ENCODE measurements at regions of chr6 and their contacts with region 1.

Region 1: DNA sequence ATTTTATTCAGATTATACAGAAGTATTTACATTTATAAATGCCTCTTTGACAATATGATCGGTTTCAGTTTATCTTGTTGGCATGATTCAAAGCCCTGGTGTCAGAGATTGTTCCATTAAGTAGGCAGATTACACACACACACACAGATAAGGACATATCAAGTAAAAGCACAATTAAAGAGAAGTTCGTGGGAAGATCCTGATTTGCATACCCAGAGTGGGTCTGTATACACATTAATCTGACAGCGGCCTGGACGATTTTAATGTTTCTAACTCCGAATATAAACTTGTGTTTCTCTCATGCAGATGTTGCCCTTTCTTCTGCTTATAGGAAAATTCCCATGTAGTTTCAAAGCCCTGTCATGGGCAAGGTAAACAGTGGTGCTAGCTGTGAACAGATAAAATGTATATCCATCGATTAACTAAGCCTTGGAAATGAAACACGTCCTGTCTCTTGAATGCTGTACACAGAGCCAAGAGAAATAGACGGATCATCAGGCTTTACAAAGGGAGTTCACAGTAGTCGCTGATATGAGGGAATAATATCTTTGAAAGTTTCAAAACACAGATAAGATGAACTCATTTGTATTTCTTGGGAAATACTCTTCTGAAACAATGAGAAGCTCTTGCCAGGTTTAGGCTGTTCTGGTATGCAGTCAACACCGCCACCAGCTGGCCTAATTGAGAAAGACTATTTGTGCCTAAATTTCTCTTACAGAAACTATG is 108.2 kb upstream of the GMDS start:
- DNase-seq: peak; percentile 56 to 73 (median 59)
- ATAC-seq: peak; percentile 90
- H3K4me3 ChIP-seq: no peak overlapping the region
- H3K27ac ChIP-seq: no peak overlapping the region
- H3K4me1 ChIP-seq: no peaks in the 10 kb centered on the region
- H3K27me3 ChIP-seq: no peaks in the 10 kb centered on the region; a peak in 2 of 5 replicates
- CTCF ChIP-seq: peak; percentile 72 to 96 (median 80)
- EP300 ChIP-seq: no peak
- POLR2A ChIP-seq: no peak
- RAD21 ChIP-seq: peak; percentile 90 to 93

Region 2: GRCh38 chr6:1047981-1048541 is 1305.5 kb before region 1 on chr6:
- CTCF ChIA-PET with region 1: no interaction called
- POLR2A ChIA-PET with region 1: no interaction called
- in situ Hi-C with region 1: no loop called
- intact Hi-C with region 1: no loop called
- DNase-seq: no peak
- ATAC-seq: no peak
- H3K4me3 ChIP-seq: no peak overlapping the region
- H3K27ac ChIP-seq: no peak overlapping the region
- H3K4me1 ChIP-seq: no peaks in the 10 kb centered on the region
- H3K27me3 ChIP-seq: peaks cover 18 to 21% of the 10 kb centered on the region in 2 experiments; a peak in 4 of 5 replicates
- CTCF ChIP-seq: no peak
- EP300 ChIP-seq: no peak
- POLR2A ChIP-seq: no peak
- RAD21 ChIP-seq: no peak

Region 3: DNA sequence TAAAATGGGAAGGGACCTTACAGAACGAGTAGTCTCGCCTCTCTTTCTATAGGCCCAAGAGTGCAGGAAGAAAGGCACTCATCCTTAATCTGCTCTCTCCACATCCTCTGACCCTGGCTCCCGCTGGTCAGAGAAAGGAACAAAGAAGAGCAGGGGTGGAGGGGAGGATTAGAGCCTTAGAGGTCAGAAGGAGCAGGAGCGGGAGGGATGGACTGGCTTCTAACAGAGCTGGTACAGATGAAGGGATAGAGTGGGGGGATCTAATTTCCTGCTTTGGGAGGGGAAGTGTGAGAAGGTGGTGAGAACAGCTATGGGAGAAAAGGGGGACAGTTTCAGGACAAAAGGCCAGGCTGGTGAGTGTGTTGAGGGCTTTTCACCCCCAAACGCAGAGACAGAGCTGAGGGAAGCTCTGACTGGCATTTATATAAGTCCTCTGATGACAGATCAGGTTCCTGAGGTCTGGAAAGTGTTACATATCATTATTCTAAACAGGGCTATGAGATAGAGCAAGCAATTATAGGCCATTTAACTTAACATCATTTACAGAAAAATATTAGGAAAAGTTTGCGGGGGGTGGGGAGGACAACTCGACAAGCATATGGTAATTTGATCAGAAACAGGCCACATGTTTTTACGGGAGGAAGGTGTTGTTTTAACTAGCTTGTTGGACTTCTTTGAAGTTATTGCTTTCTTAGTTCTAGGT is 632.8 kb before region 1 on chr6:
- CTCF ChIA-PET with region 1: no interaction called
- POLR2A ChIA-PET with region 1: no interaction called
- in situ Hi-C with region 1: no loop called
- intact Hi-C with region 1: no loop called
- DNase-seq: no peak
- ATAC-seq: no peak
- H3K4me3 ChIP-seq: no peak overlapping the region
- H3K27ac ChIP-seq: no peak overlapping the region
- H3K4me1 ChIP-seq: no peaks in the 10 kb centered on the region; a peak in 1 of 5 replicates
- H3K27me3 ChIP-seq: peaks cover 0 to 9% of the 10 kb centered on the region in 2 experiments; a peak in 3 of 5 replicates
- CTCF ChIP-seq: no peak
- EP300 ChIP-seq: no peak
- POLR2A ChIP-seq: no peak
- RAD21 ChIP-seq: no peak

Region 4: GRCh38 chr6:1893470-1894130 is 460.0 kb before region 1 on chr6:
- CTCF ChIA-PET with region 1: no interaction called
- POLR2A ChIA-PET with region 1: no interaction called
- in situ Hi-C with region 1: loop called (anchors 10 kb)
- intact Hi-C with region 1: no loop called
- DNase-seq: peak in 2 of 4 experiments; percentile 18 to 20
- ATAC-seq: 0 out of 3 replicates have a peak, but pooled peaks have one; percentile 42
- H3K4me3 ChIP-seq: no peak overlapping the region
- H3K27ac ChIP-seq: no peak overlapping the region
- H3K4me1 ChIP-seq: no peaks in the 10 kb centered on the region
- H3K27me3 ChIP-seq: peaks cover 3 to 11% of the 10 kb centered on the region in 2 experiments; a peak in 4 of 5 replicates
- CTCF ChIP-seq: peak; percentile 32 to 52 (median 43); a peak in 2 of 6 replicates
- EP300 ChIP-seq: no peak
- POLR2A ChIP-seq: no peak
- RAD21 ChIP-seq: peak; percentile 61 to 65

Region 5: DNA sequence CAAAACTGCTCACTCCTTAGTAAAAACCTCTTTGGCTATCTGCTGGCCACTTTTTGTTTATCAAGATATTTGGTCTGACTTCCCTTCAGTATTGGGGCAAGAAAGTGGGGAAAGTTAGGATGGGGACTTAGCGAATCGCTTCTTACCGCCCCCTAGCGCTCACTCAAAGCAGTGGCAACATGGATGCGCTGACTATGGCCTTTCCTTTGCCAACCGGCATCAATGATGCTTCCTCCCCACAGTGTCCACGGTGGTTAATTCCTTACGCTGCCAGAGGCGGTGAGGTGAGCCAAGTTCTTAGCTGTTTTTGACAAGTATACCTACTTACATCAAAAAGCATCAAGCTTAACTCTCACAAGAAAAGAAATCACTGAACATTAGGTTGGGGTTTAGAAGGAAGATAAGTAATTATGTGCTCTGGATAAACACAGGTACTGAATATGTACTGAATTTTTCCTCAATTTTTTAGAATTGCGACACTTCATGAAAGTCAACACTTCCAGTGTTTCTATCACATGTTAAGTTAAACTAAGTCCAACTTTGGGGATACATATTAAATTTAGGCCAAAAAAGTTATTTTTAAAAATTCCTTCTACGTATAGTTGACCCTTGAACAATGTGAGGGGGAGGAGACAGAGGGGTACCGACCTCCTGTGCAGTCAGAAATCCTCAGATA is 194.8 kb before region 1 on chr6:
- CTCF ChIA-PET with region 1: no interaction called
- POLR2A ChIA-PET with region 1: no interaction called
- in situ Hi-C with region 1: no loop called
- intact Hi-C with region 1: loop called (anchors 1 kb)
- DNase-seq: peak; percentile 75 to 79 (median 76)
- ATAC-seq: peak; percentile 100
- H3K4me3 ChIP-seq: no peak overlapping the region
- H3K27ac ChIP-seq: no peak overlapping the region
- H3K4me1 ChIP-seq: no peaks in the 10 kb centered on the region
- H3K27me3 ChIP-seq: peaks cover 0 to 3% of the 10 kb centered on the region in 2 experiments; a peak in 2 of 5 replicates
- CTCF ChIP-seq: peak; percentile 86 to 96 (median 89)
- EP300 ChIP-seq: no peak
- POLR2A ChIP-seq: no peak
- RAD21 ChIP-seq: peak; percentile 41 to 68

Region 6: GRCh38 chr6:2209226-2209809 is 144.3 kb before region 1 on chr6:
- CTCF ChIA-PET with region 1: interaction called, 17 read pairs
- POLR2A ChIA-PET with region 1: no interaction called
- in situ Hi-C with region 1: no loop called
- intact Hi-C with region 1: loop called (anchors 1 kb)
- DNase-seq: peak in 3 of 4 experiments; percentile 39 to 62 (median 49)
- ATAC-seq: peak; percentile 96
- H3K4me3 ChIP-seq: no peak overlapping the region
- H3K27ac ChIP-seq: no peak overlapping the region
- H3K4me1 ChIP-seq: no peaks in the 10 kb centered on the region
- H3K27me3 ChIP-seq: no peaks in the 10 kb centered on the region; a peak in 2 of 5 replicates
- CTCF ChIP-seq: peak; percentile 69 to 75 (median 75)
- EP300 ChIP-seq: no peak
- POLR2A ChIP-seq: no peak
- RAD21 ChIP-seq: peak; percentile 35 to 74; a peak in 3 of 4 replicates

Region 7: GRCh38 chr6:2531426-2532215 is 178.0 kb after region 1 on chr6:
- CTCF ChIA-PET with region 1: no interaction called
- POLR2A ChIA-PET with region 1: no interaction called
- in situ Hi-C with region 1: no loop called
- intact Hi-C with region 1: no loop called
- DNase-seq: no peak
- ATAC-seq: no peak
- H3K4me3 ChIP-seq: no peak overlapping the region
- H3K27ac ChIP-seq: no peak overlapping the region
- H3K4me1 ChIP-seq: no peaks in the 10 kb centered on the region
- H3K27me3 ChIP-seq: peaks cover 4 to 15% of the 10 kb centered on the region in 2 experiments; a peak in 3 of 5 replicates
- CTCF ChIP-seq: no peak
- EP300 ChIP-seq: no peak
- POLR2A ChIP-seq: no peak
- RAD21 ChIP-seq: no peak

Region 8: DNA sequence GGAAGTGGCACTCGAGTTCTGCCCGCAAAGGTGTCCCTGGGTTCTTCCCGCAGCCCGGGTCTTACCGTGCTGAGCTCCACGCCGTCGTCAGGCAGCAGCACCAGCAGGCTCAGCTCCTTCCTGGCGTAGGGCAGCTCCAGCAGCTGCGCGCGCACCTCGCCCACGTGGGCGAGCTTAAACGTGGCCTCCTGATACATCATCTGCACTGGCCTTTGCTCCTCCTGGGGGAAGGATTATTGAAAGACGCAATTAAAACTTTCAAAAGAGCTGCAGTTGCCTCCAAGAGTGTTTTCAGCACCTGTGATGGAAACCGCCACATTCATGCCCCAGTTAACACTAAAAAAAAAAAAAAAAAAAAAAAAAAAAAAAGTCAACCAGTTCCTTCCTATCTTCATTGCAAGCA is 538.2 kb after region 1 on chr6:
- CTCF ChIA-PET with region 1: no interaction called
- POLR2A ChIA-PET with region 1: no interaction called
- in situ Hi-C with region 1: no loop called
- intact Hi-C with region 1: no loop called
- DNase-seq: no peak
- ATAC-seq: no peak
- H3K4me3 ChIP-seq: no peak overlapping the region
- H3K27ac ChIP-seq: no peak overlapping the region
- H3K4me1 ChIP-seq: no peaks in the 10 kb centered on the region; a peak in 1 of 5 replicates
- H3K27me3 ChIP-seq: no peaks in the 10 kb centered on the region
- CTCF ChIP-seq: no peak
- EP300 ChIP-seq: no peak
- POLR2A ChIP-seq: no peak
- RAD21 ChIP-seq: no peak

Measured in K562 (cell line).